ENCODE measurements at regions of chr13 and their contacts with region 1.

Region 1: GRCh38 chr13:29513397-29514322 is 81.8 kb downstream of the SLC7A1 start:
- DNase-seq: no peak
- H3K4me3 ChIP-seq: no peak overlapping the region
- H3K27ac ChIP-seq: no peak overlapping the region
- H3K4me1 ChIP-seq: peaks cover 0 to 23% (median 18%) of the 10 kb centered on the region in 4 donors
- H3K27me3 ChIP-seq: no peaks in the 10 kb centered on the region
- CTCF ChIP-seq: no peak
- EP300 ChIP-seq: no peak
- POLR2A ChIP-seq: no peak

Region 2: GRCh38 chr13:29595380-29596063 is 81.9 kb after region 1 on chr13 and contains the start of gene SLC7A1:
- intact Hi-C with region 1: loop called (anchors 5 kb)
- DNase-seq: peak; percentile 93
- H3K4me3 ChIP-seq: peak within 1 kb of the TSS; percentile 91 to 99 (median 95)
- H3K27ac ChIP-seq: peak within 1 kb of the TSS; percentile 94 to 98 (median 96)
- H3K4me1 ChIP-seq: peaks cover 0 to 41% (median 30%) of the 10 kb centered on the region in 4 donors
- H3K27me3 ChIP-seq: peaks cover 0 to 6% (median 0%) of the 10 kb centered on the region in 4 donors
- CTCF ChIP-seq: no peak
- EP300 ChIP-seq: no peak
- POLR2A ChIP-seq: no peak
- total RNA-seq, gene SLC7A1: 15.0 to 28.8 (median 21.6) TPM

Region 3: GRCh38 chr13:29718694-29719093 is 205.0 kb after region 1 on chr13:
- intact Hi-C with region 1: no loop called
- DNase-seq: no peak
- H3K4me3 ChIP-seq: no peak overlapping the region
- H3K27ac ChIP-seq: no peak overlapping the region
- H3K4me1 ChIP-seq: no peaks in the 10 kb centered on the region
- H3K27me3 ChIP-seq: no peaks in the 10 kb centered on the region
- CTCF ChIP-seq: no peak
- EP300 ChIP-seq: no peak
- POLR2A ChIP-seq: no peak

Region 4: DNA sequence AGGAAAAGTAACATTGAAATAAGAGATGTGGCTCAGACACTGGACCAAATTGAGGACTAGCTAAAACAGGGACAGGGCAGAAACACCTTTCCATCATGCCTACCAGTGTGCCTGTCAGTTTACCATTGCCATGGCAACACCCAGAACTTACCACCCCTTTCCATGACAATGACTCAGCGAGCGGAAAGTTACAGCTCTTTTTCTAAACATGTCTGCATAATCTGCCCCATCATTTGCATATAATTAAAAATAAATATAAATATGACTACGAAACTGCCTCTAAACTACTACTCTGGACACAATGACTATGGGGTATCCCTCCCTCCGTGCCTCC is 240.8 kb after region 1 on chr13:
- intact Hi-C with region 1: no loop called
- DNase-seq: no peak
- H3K4me3 ChIP-seq: no peak overlapping the region
- H3K27ac ChIP-seq: no peak overlapping the region
- H3K4me1 ChIP-seq: peaks cover 0 to 13% (median 5%) of the 10 kb centered on the region in 4 donors
- H3K27me3 ChIP-seq: no peaks in the 10 kb centered on the region
- CTCF ChIP-seq: no peak
- EP300 ChIP-seq: no peak
- POLR2A ChIP-seq: no peak

Region 5: DNA sequence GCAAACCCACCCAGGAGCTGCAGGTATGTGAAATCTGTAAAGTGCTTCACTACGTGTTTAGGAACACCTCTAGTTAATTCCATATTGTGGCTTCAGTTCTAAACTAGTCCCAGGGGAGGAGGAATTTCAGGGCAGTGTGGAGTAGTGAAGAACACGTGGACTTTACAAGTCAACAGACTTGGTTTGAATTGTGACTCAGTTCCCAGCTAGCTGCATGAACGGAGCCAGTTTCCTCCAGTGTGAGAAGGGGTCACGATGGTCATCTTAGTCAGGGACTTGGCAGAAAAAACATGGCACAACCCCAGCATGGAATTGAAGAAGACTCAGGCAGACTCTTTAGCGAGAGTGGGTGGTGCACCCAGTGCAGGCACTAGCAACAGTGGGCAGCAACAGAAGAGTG is 512.4 kb after region 1 on chr13:
- intact Hi-C with region 1: no loop called
- DNase-seq: no peak
- H3K4me3 ChIP-seq: no peak overlapping the region
- H3K27ac ChIP-seq: no peak overlapping the region
- H3K4me1 ChIP-seq: no peaks in the 10 kb centered on the region
- H3K27me3 ChIP-seq: no peaks in the 10 kb centered on the region
- CTCF ChIP-seq: no peak
- EP300 ChIP-seq: no peak
- POLR2A ChIP-seq: no peak

Measured in esophagus muscularis mucosa (tissue), 4 donors.